ENCODE measurements at regions of chr9 and their contacts with region 1.

Region 1: DNA sequence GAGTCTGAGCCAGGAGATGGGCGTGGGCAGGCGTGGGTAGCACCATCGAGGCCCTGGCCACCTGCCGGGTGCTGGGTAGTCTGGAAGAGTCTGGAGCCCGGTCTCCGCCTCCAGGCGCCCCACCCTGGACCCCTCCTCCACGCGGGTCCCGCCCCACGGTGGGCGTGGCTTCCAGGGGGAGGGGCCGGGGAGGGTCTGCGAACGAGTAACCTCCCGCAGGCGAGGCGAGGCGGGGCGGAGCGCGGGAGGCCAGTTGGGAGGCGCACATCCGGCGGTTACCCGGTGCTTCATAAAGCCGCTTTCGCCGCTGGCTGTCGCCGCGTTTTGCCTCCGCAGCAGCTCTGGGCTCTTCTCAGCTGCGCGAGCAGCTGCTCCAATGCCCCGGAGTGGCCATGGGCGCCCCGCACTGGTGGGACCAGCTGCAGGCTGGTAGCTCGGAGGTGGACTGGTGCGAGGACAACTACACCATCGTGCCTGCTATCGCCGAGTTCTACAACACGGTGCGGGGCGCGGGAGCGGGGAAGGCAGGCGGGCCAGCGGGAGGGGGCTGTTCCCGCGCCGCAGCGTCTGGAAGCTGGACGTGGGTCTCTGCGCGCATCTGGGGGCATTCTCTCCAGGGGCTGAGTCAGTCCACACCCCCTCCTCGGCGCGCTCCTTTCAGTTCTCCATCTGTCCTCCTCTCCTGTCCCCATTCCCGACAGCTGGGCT is at the start of gene ACER2:
- DNase-seq: peak; percentile 95
- H3K4me3 ChIP-seq: peak within 1 kb of the TSS; percentile 82 to 91 (median 84)
- H3K27ac ChIP-seq: peak within 1 kb of the TSS; percentile 19
- H3K4me1 ChIP-seq: peaks cover 21% of the 10 kb centered on the region
- H3K27me3 ChIP-seq: no peaks in the 10 kb centered on the region
- CTCF ChIP-seq: peak in 1 of 2 donors; percentile 41
- POLR2A ChIP-seq: peak; percentile 95
- total RNA-seq, gene ACER2: 7.3 and 7.7 TPM in 2 replicates

Region 2: DNA sequence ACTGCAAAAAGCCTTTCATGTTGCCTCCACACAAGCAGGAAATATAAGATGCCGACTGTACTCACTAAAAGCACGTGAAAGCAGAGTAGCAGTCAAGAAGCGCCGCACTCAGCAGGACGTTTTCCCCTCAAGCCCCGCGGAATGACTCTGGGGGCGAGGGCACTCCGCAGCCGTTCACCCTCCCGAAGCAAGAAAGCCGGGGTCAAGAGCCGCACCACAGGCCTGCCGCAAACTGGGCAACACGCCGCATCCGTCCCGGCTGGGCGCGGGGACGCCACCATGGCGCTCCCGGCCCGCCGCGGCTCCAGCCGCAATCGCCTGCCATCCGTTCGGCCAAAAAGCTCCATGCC is 29.2 kb before region 1 on chr9:
- CTCF ChIA-PET with region 1: no interaction called
- POLR2A ChIA-PET with region 1: no interaction called
- dilution Hi-C with region 1: no loop called
- intact Hi-C with region 1: loop called (anchors 1 kb)
- DNase-seq: peak; percentile 69
- H3K4me3 ChIP-seq: peak overlapping the region; percentile 84 to 94 (median 93)
- H3K27ac ChIP-seq: peak overlapping the region; percentile 62
- H3K4me1 ChIP-seq: peaks cover 37% of the 10 kb centered on the region
- H3K27me3 ChIP-seq: no peaks in the 10 kb centered on the region
- CTCF ChIP-seq: no peak
- POLR2A ChIP-seq: no peak

Region 3: GRCh38 chr9:19386502-19387044 is 22.3 kb before region 1 on chr9:
- CTCF ChIA-PET with region 1: no interaction called
- POLR2A ChIA-PET with region 1: no interaction called
- dilution Hi-C with region 1: no loop called
- intact Hi-C with region 1: loop called (anchors 1 kb)
- DNase-seq: peak; percentile 92
- H3K4me3 ChIP-seq: peak overlapping the region in 2 of 3 experiments; percentile 19 to 50
- H3K27ac ChIP-seq: peak overlapping the region; percentile 77
- H3K4me1 ChIP-seq: peaks cover 23% of the 10 kb centered on the region
- H3K27me3 ChIP-seq: no peaks in the 10 kb centered on the region
- CTCF ChIP-seq: no peak
- POLR2A ChIP-seq: no peak

Region 4: GRCh38 chr9:19424176-19424779 is 15.4 kb after region 1 on chr9:
- CTCF ChIA-PET with region 1: interaction called, 3 read pairs
- POLR2A ChIA-PET with region 1: no interaction called
- dilution Hi-C with region 1: no loop called
- intact Hi-C with region 1: loop called (anchors 1 kb)
- DNase-seq: peak; percentile 75
- H3K4me3 ChIP-seq: no peak overlapping the region
- H3K27ac ChIP-seq: peak overlapping the region; percentile 39
- H3K4me1 ChIP-seq: peaks cover 20% of the 10 kb centered on the region
- H3K27me3 ChIP-seq: no peaks in the 10 kb centered on the region
- CTCF ChIP-seq: no peak
- POLR2A ChIP-seq: no peak

Region 5: DNA sequence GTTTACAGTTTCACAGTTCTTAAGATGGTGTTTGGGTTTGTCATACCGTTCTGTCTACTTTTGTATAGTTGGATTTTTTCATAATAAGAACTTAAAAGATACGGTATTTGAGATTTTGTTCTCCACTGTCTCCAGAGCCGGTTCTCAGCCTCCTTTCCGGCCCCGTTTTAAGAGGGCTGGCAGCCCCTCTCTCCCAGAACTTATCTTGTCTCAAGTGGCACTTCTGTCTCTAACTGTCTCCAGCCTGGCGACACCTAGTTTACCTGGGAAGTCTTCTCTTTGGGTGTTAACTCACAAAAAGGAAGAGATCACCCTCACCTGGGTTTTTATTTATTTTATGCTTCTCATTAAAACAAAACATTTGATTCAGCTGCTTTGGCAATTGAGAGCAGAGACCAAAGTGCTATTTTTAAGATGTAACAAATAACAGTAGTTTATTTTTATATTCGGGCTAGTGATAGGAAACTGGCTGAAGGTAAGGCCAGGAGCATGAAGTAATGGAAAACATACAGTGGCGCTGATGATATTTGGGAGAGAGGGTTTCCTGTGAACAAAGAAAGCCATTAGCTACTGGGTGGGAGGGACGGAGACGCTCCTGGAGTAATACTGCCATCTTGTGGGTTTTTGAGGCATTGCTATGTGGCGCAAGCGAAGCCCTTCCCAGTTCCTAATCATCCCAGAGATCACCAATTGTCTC is 48.3 kb after region 1 on chr9:
- CTCF ChIA-PET with region 1: interaction called, 6 read pairs
- POLR2A ChIA-PET with region 1: interaction called, 3 read pairs
- dilution Hi-C with region 1: no loop called
- intact Hi-C with region 1: loop called (anchors 1 kb)
- DNase-seq: peak; percentile 80
- H3K4me3 ChIP-seq: no peak overlapping the region
- H3K27ac ChIP-seq: no peak overlapping the region
- H3K4me1 ChIP-seq: peaks cover 6% of the 10 kb centered on the region
- H3K27me3 ChIP-seq: no peaks in the 10 kb centered on the region
- CTCF ChIP-seq: peak; percentile 88 to 93
- POLR2A ChIP-seq: no peak

Region 6: GRCh38 chr9:19521205-19521604 is 112.4 kb after region 1 on chr9:
- CTCF ChIA-PET with region 1: no interaction called
- POLR2A ChIA-PET with region 1: no interaction called
- dilution Hi-C with region 1: no loop called
- intact Hi-C with region 1: no loop called
- DNase-seq: no peak
- H3K4me3 ChIP-seq: no peak overlapping the region
- H3K27ac ChIP-seq: no peak overlapping the region
- H3K4me1 ChIP-seq: no peaks in the 10 kb centered on the region
- H3K27me3 ChIP-seq: peaks cover 0 to 3% of the 10 kb centered on the region in 2 experiments
- CTCF ChIP-seq: no peak
- POLR2A ChIP-seq: no peak